Heart left ventricle (tissue), 16 donors: ENCODE measurements at regions of chr5 and their contacts with region 1.

Region 1: GRCh38 chr5:181191529-181192394 is 13.2 kb downstream of the TRIM7 start:
- DNase-seq: peak; percentile 94 to 97 (median 96)
- ATAC-seq: peak; percentile 68 to 91 (median 84)
- H3K4me3 ChIP-seq: peak overlapping the region; percentile 61 to 93 (median 83)
- H3K27ac ChIP-seq: peak overlapping the region; percentile 77 to 97 (median 94)
- H3K4me1 ChIP-seq: peaks cover 0 to 42% (median 15%) of the 10 kb centered on the region in 12 donors
- H3K27me3 ChIP-seq: no peaks in the 10 kb centered on the region
- CTCF ChIP-seq: peak in 2 of 12 donors; percentile 9 to 27
- POLR2A ChIP-seq: peak in 1 of 2 donors; percentile 79

Region 2: DNA sequence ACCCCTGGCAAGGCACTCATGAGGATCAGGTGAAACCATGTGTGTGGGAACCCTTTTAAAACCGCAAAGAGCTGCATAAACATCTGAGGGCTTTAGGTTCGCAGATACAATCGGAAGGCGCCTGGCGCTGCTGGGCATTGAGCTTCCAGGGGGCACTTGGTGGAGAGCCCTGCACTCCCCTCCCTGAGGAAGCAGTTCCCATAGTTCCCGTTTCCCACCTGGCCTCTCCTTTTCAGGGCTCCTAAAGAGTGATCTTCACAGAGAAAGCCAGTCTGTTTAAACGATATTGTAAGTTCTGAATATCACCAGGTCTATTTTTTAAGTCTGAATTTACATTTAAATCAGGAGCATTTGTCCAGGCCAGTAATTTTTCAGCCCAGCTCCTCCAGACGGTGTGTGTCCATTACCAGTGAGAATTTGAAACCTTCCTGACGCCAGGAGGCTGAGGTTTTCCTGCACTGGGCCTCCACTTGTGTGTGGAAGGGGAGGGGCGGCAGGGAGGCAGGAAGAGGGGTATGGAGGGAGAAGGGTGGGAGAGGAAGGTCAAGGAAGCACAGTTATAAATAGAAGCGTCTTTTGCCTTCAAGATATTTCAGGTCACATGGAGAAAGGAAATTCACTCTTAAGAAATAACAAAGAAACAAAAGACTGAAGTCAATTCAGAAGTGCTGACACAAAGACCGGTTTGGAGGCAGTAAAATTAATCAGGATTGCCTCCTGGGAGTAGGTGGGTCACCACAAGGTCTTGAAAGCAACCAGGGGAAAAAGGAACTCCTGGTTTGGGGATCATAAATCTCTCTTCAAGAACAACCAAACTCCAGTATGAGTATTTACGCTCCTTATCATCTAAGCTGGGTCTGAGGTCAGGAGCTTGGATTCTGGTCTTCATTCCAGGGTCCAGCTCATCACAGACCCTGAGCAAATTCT is 374.9 kb before region 1 on chr5:
- intact Hi-C with region 1: no loop called
- DNase-seq: peak in 4 of 5 donors; percentile 68 to 84 (median 76)
- ATAC-seq: peak; percentile 53 to 84 (median 76)
- H3K4me3 ChIP-seq: peak overlapping the region in 5 of 12 donors; percentile 5 to 19 (median 13)
- H3K27ac ChIP-seq: peak overlapping the region; percentile 56 to 99 (median 88)
- H3K4me1 ChIP-seq: peaks cover 8 to 73% (median 48%) of the 10 kb centered on the region in 12 donors
- H3K27me3 ChIP-seq: no peaks in the 10 kb centered on the region
- CTCF ChIP-seq: peak in 4 of 12 donors; percentile 3 to 19 (median 13)
- POLR2A ChIP-seq: no peak

Region 3: DNA sequence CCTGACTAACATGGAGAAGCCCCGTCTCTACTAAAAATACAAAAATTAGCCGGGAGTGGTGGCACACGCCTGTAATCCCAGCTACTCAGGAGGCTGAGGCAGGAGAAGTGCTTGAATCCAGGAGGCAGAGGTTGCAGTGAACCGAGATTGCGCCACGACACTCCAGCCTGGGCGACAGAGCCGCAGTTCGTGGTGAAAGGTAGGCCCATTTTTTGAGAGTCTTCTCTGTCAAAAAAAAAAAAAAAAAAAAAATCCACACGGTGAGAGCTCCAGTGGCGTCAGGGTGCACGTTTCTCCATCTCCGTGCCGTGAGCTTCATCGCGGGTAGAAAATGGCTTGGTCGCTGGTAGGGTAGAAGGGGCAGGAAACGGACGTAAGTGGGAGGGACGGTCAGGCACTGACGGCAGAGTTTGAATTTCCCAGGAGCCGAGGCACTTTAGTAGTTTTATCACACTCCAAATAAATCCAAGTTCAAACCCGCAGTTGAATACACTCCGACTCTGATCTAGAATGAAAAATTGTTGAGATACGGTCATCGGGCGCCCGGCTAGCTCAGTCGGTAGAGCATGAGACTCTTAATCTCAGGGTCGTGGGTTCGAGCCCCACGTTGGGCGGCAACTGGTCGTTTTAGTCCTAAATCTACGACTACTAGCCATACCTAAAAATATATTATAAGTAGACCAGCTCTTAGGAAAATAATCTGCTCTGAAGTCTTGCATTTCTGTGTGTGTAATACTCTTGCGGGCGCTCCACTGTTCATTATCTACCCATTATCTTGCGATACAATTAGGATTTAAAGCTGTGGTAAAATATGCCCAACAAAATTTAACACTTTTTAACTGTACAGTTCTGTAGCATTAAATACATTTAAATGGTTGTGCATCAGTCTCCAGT is 15.7 kb after region 1 on chr5:
- intact Hi-C with region 1: loop called in 8 of 10 experiments (anchors 1 to 2 kb)
- DNase-seq: peak; percentile 62 to 88 (median 79)
- ATAC-seq: peak; percentile 36 to 70 (median 50)
- H3K4me3 ChIP-seq: peak overlapping the region; percentile 35 to 77 (median 68)
- H3K27ac ChIP-seq: peak overlapping the region; percentile 30 to 90 (median 82)
- H3K4me1 ChIP-seq: peaks cover 4 to 46% (median 23%) of the 10 kb centered on the region in 12 donors
- H3K27me3 ChIP-seq: peaks cover 0 to 3% (median 0%) of the 10 kb centered on the region in 9 donors
- CTCF ChIP-seq: no peak
- POLR2A ChIP-seq: no peak

Region 4: GRCh38 chr5:181217803-181218062 is 26.0 kb after region 1 on chr5:
- intact Hi-C with region 1: loop called in 8 of 10 experiments (anchors 1 to 5 kb)
- DNase-seq: no peak
- ATAC-seq: peak in 2 of 4 donors; percentile 0 to 1
- H3K4me3 ChIP-seq: peak overlapping the region in 11 of 12 donors; percentile 31 to 64 (median 53)
- H3K27ac ChIP-seq: peak overlapping the region in 11 of 12 donors; percentile 4 to 79 (median 70)
- H3K4me1 ChIP-seq: peaks cover 0 to 47% (median 15%) of the 10 kb centered on the region in 12 donors
- H3K27me3 ChIP-seq: no peaks in the 10 kb centered on the region
- CTCF ChIP-seq: no peak
- POLR2A ChIP-seq: no peak

Region 5: GRCh38 chr5:181223058-181223728 is 31.4 kb after region 1 on chr5 and contains the start of gene TRIM41:
- intact Hi-C with region 1: loop called in 9 of 10 experiments (anchors 1 to 5 kb)
- DNase-seq: peak; percentile 99 to 100 (median 99)
- ATAC-seq: peak; percentile 87 to 93 (median 90)
- H3K4me3 ChIP-seq: peak within 1 kb of the TSS; percentile 63 to 96 (median 83)
- H3K27ac ChIP-seq: peak within 1 kb of the TSS; percentile 92 to 100 (median 97)
- H3K4me1 ChIP-seq: peaks cover 0 to 48% (median 18%) of the 10 kb centered on the region in 12 donors
- H3K27me3 ChIP-seq: no peaks in the 10 kb centered on the region
- CTCF ChIP-seq: peak in 6 of 12 donors; percentile 19 to 37 (median 27)
- POLR2A ChIP-seq: peak in 1 of 2 donors; percentile 71
- total RNA-seq, gene TRIM41: 12.3 to 27.3 (median 23.9) TPM

Region 6: DNA sequence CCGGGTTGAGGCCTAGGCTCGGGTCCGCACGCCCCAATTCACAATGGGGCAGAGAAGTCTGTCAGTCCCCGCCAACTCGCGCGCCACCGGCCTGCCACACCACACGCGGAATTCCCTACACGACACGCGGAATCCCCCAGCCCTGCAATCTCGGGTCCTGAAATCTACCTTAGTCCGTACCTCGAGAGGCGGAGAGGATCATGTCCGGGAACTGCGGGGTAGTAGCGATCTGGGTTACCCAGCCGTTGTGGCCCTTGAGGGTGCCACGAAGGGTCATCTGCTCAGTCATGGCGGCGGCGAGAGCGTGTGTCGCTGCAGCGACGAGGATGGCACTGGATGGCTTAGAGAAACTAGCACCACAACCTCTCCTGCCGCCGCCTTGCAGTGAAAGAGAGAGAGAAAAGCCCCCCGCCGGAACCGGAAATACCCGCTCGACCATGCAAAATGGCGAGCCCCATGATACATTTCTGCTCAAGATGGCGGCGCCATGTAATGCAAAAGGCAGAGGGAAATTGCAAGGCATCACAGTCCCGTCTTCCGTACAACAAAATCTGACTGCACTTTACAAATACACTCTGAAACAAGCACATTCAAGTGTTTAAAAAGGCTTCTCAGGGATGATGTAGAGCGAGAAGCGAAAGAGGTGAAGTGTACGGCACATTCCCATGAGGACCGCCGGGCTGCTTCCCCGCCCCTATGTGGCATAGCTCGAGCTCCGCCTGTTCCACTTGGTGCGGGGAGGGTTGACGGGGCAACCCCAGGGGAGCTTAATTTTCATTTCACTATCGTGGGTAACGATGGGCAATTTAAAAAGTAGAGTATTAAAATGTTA is 52.0 kb after region 1 on chr5 and contains the start of gene RACK1:
- intact Hi-C with region 1: loop called in 2 of 10 experiments (anchors 1 to 2 kb)
- DNase-seq: peak; percentile 90 to 93 (median 92)
- ATAC-seq: peak; percentile 67 to 75 (median 70)
- H3K4me3 ChIP-seq: peak within 1 kb of the TSS; percentile 68 to 90 (median 80)
- H3K27ac ChIP-seq: peak within 1 kb of the TSS; percentile 83 to 99 (median 95)
- H3K4me1 ChIP-seq: peaks cover 3 to 74% (median 47%) of the 10 kb centered on the region in 12 donors
- H3K27me3 ChIP-seq: no peaks in the 10 kb centered on the region
- CTCF ChIP-seq: no peak
- POLR2A ChIP-seq: peak in 1 of 2 donors; percentile 63
- total RNA-seq, gene RACK1: 560 to 1,237 (median 771) TPM

Region 7: GRCh38 chr5:181260387-181261319 is 68.9 kb after region 1 on chr5 and contains the start of gene TRIM52:
- intact Hi-C with region 1: loop called in 7 of 10 experiments (anchors 1 to 5 kb)
- DNase-seq: peak; percentile 92 to 96 (median 95)
- ATAC-seq: peak; percentile 88 to 95 (median 92)
- H3K4me3 ChIP-seq: peak within 1 kb of the TSS; percentile 69 to 100 (median 93)
- H3K27ac ChIP-seq: peak within 1 kb of the TSS; percentile 92 to 100 (median 98)
- H3K4me1 ChIP-seq: peaks cover 5 to 62% (median 47%) of the 10 kb centered on the region in 12 donors
- H3K27me3 ChIP-seq: no peaks in the 10 kb centered on the region
- CTCF ChIP-seq: no peak
- POLR2A ChIP-seq: peak; percentile 45 to 76
- total RNA-seq, gene TRIM52: 5.6 to 12.8 (median 7.6) TPM